ENCODE measurements at regions of chr14 and their contacts with region 1.

Region 1: DNA sequence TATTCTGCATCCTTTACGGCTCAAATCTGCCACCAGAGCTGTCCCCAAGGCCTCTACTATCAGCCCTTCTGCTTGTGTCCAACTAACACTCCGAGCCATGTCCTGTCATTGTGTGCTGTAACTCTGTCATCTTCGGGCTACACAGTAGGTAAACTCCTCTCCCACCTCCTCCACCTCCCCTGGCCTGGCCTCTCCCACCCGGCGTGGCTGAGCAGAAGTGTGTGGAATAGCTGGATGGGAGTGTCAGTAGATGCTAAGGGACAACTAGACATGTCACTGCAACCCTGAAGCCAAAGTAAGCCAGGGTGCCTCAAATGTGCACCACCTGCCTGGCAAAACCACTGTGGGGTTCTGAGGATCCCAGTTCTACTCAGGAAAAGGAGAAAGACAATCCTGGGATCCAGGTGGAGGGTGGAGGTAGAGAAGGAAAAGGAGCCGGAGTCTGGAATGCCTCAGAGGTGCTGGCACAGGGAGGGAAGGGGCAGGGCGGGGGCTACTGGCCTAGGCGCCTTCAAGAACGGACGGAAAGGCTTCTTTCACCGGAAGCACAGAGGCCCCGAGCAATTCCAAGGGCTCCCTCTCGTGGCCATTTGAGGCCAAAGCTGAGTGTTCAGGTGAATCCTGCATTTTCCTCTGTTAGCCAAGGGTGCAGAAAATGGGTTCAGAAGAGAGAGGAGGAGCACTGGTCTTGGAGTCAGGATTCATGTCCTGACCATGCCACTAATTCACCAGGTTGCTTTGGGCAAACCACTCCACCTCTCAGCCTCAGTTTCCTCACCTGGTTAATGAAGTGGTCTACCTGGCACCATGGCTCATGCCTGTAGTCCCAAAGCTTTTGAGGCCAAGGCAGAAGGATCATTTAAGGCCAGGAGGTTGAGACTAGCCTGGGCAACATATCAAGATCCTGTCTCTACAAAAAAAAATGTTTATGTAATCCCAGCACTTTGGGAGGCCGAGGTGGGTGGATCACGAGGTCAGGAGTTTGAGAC is 20.5 kb upstream of the FAM181A start:
- DNase-seq: no peak
- ATAC-seq: peak in 2 of 4 donors; percentile 45 to 55
- H3K4me3 ChIP-seq: no peak overlapping the region
- H3K27ac ChIP-seq: no peak overlapping the region
- H3K4me1 ChIP-seq: no peaks in the 10 kb centered on the region
- H3K27me3 ChIP-seq: peaks cover 0 to 2% (median 0%) of the 10 kb centered on the region in 3 donors
- CTCF ChIP-seq: peak; percentile 58

Region 2: GRCh38 chr14:93736378-93737014 is 170.1 kb before region 1 on chr14:
- intact Hi-C with region 1: no loop called
- DNase-seq: peak in 1 of 2 donors; percentile 20
- ATAC-seq: no peak
- H3K4me3 ChIP-seq: no peak overlapping the region
- H3K27ac ChIP-seq: no peak overlapping the region
- H3K4me1 ChIP-seq: no peaks in the 10 kb centered on the region
- H3K27me3 ChIP-seq: no peaks in the 10 kb centered on the region
- CTCF ChIP-seq: no peak

Region 3: GRCh38 chr14:93788543-93789227 is 118.0 kb before region 1 on chr14:
- intact Hi-C with region 1: loop called in 1 of 2 experiments (anchors 10 kb)
- DNase-seq: peak in 1 of 2 donors; percentile 49
- ATAC-seq: peak; percentile 79 to 93 (median 85)
- H3K4me3 ChIP-seq: peak overlapping the region; percentile 66
- H3K27ac ChIP-seq: no peak overlapping the region
- H3K4me1 ChIP-seq: no peaks in the 10 kb centered on the region
- H3K27me3 ChIP-seq: peaks cover 0 to 15% (median 0%) of the 10 kb centered on the region in 3 donors
- CTCF ChIP-seq: peak; percentile 44